ENCODE measurements at regions of chr10 and their contacts with region 1.

Region 1: DNA sequence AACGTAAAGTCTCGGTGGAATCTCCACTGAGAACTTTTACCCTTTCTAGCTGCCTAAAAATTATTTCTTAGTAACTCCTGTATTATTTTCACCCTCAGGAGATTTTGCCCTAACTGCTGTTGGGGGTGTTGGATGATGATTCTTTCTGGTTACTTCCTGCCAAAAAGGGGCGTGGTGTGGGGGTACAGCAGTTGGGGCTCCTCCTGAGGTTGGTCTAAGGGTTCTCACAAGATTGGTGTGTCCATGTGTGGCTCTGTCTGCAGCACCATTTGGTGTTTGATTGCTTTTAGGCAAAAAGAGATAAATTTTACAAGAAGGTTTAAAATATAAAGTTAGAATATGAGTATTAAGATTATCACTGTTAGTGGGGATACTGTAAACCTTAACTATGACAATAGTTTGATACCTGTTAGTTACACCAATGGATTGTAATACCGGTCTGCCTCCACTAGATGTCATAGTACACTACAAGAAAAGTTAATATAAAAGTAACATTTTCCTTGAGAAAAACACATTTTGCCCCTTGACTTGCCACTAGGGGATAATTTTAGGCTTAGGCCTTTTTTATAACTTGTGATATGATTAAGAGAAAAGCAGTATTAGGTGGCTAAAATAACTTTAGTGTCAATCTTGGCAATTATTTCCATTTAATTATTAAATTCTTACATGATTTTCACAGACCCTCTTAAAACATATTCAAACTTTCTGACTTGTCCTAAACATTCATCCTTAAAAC is 928.7 kb downstream of the IPMK start:
- DNase-seq: peak in 2 of 9 experiments; percentile 2 to 9
- ATAC-seq: no peak
- H3K4me3 ChIP-seq: no peak overlapping the region
- H3K4me3 Mint-ChIP-seq: no peak overlapping the region
- H3K27ac ChIP-seq: no peak overlapping the region
- H3K27ac Mint-ChIP-seq: no peak overlapping the region
- H3K4me1 ChIP-seq: no peaks in the 10 kb centered on the region
- H3K4me1 Mint-ChIP-seq: no peaks in the 10 kb centered on the region
- H3K27me3 ChIP-seq: no peaks in the 10 kb centered on the region
- H3K27me3 Mint-ChIP-seq: no peaks in the 10 kb centered on the region
- CTCF ChIP-seq: peak; percentile 34

Region 2: DNA sequence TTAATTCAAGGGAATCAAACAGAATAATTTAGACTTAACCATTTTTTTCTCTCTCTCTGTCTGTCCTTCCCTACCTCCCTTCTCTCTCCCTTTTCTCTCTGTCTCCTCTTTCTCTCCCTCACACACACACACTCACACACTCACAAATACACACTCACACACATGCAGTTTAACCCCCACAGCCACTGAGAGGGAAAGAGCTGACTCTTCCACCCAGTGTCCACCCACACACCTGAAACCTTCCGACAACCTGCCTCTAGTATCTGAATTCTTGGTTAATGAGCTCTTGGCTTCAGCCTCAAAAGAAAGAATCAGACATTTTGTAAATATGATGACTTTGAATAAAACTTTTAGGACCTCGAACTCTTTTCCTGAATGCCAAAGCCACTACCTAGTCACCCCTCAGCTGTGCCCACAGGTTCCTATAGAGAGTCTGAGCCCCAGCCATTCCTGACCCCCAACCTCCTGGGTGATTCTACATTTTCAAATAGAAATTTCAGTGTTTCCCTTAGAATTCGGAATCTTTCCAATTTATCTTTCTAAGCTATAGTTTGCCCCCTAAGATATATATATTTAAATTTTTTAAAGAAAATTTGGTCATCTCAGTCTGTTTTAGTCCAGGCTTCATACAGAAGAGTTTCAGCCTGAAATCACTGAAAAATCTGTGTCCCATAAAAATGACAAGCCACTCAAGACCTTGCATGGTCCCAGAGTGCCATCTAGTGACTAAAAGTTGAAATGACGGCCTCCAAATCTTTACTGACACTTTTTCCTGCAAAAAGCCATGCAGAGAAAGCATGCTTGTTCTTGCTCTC is 725.9 kb after region 1 on chr10:
- CTCF ChIA-PET with region 1: no interaction called
- POLR2A ChIA-PET with region 1: no interaction called
- intact Hi-C with region 1: loop called (anchors 5 kb)
- DNase-seq: peak in 2 of 9 experiments; percentile 13 to 19
- ATAC-seq: no peak
- H3K4me3 ChIP-seq: no peak overlapping the region
- H3K4me3 Mint-ChIP-seq: no peak overlapping the region
- H3K27ac ChIP-seq: no peak overlapping the region
- H3K27ac Mint-ChIP-seq: no peak overlapping the region
- H3K4me1 ChIP-seq: no peaks in the 10 kb centered on the region
- H3K4me1 Mint-ChIP-seq: no peaks in the 10 kb centered on the region
- H3K27me3 ChIP-seq: no peaks in the 10 kb centered on the region
- H3K27me3 Mint-ChIP-seq: peaks cover 5% of the 10 kb centered on the region
- CTCF ChIP-seq: peak; percentile 38

Region 3: DNA sequence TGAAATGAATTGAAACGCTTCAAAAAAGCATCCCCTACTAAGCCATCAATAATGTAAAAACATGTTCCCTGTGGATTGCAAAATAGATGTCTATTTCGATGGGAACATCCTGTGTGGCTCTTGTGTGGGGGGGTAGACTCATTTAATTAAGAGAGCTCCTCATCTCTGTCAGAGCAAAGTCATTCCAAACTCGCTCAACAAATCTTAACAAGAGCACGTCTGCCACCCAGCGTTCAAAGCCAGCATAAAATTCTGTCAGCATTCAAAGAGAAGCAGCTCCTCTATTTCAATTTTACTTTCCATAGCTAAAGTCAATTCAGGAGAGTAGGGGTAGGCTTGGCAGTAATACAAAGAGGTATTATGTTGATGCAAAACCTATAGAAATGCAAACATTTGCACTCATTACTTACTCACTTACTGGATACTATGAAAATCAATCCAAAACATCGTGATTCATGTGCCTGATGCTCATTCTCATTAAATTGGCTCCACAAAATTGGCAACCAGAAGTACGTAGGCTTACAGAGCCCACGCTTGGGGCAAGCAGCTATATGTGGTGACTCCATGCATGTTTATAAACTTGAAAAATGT is 813.8 kb after region 1 on chr10:
- CTCF ChIA-PET with region 1: no interaction called
- POLR2A ChIA-PET with region 1: no interaction called
- intact Hi-C with region 1: loop called in 1 of 2 experiments (anchors 10 kb)
- DNase-seq: peak in 5 of 9 experiments; percentile 20 to 31 (median 24)
- ATAC-seq: no peak
- H3K4me3 ChIP-seq: no peak overlapping the region
- H3K4me3 Mint-ChIP-seq: no peak overlapping the region
- H3K27ac ChIP-seq: no peak overlapping the region
- H3K27ac Mint-ChIP-seq: no peak overlapping the region
- H3K4me1 ChIP-seq: no peaks in the 10 kb centered on the region
- H3K4me1 Mint-ChIP-seq: no peaks in the 10 kb centered on the region
- H3K27me3 ChIP-seq: no peaks in the 10 kb centered on the region
- H3K27me3 Mint-ChIP-seq: peaks cover 27% of the 10 kb centered on the region
- CTCF ChIP-seq: peak; percentile 24

Measured in CD8-positive, alpha-beta T cell (primary cell).